ENCODE measurements at regions of chr6 and their contacts with region 1.

Region 1: GRCh38 chr6:45677381-45678284 is 299.9 kb upstream of the SUPT3H start:
- DNase-seq: peak in 4 of 5 donors; percentile 22 to 50 (median 37)
- ATAC-seq: peak; percentile 51 to 79 (median 68)
- H3K4me3 ChIP-seq: no peak overlapping the region
- H3K27ac ChIP-seq: peak overlapping the region in 1 of 12 donors; percentile 35
- H3K4me1 ChIP-seq: peaks cover 0 to 19% (median 2%) of the 10 kb centered on the region in 12 donors
- H3K27me3 ChIP-seq: no peaks in the 10 kb centered on the region
- CTCF ChIP-seq: no peak
- POLR2A ChIP-seq: no peak

Region 2: GRCh38 chr6:44580901-44581300 is 1096.7 kb before region 1 on chr6:
- intact Hi-C with region 1: no loop called
- DNase-seq: no peak
- ATAC-seq: no peak
- H3K4me3 ChIP-seq: no peak overlapping the region
- H3K27ac ChIP-seq: no peak overlapping the region
- H3K4me1 ChIP-seq: peaks cover 0 to 4% (median 0%) of the 10 kb centered on the region in 12 donors
- H3K27me3 ChIP-seq: no peaks in the 10 kb centered on the region
- CTCF ChIP-seq: no peak
- POLR2A ChIP-seq: no peak

Region 3: GRCh38 chr6:45991189-45991588 is 313.6 kb after region 1 on chr6:
- intact Hi-C with region 1: loop called in 1 of 10 experiments (anchors 10 kb)
- DNase-seq: no peak
- ATAC-seq: no peak
- H3K4me3 ChIP-seq: no peak overlapping the region
- H3K27ac ChIP-seq: peak overlapping the region; percentile 46 to 95 (median 86)
- H3K4me1 ChIP-seq: peaks cover 0 to 75% (median 58%) of the 10 kb centered on the region in 12 donors
- H3K27me3 ChIP-seq: no peaks in the 10 kb centered on the region
- CTCF ChIP-seq: peak in 3 of 12 donors; percentile 8 to 22 (median 10)
- POLR2A ChIP-seq: no peak